Breast epithelium (tissue), 4 donors: ENCODE measurements at regions of chr15 and their contacts with region 1.

Region 1: DNA sequence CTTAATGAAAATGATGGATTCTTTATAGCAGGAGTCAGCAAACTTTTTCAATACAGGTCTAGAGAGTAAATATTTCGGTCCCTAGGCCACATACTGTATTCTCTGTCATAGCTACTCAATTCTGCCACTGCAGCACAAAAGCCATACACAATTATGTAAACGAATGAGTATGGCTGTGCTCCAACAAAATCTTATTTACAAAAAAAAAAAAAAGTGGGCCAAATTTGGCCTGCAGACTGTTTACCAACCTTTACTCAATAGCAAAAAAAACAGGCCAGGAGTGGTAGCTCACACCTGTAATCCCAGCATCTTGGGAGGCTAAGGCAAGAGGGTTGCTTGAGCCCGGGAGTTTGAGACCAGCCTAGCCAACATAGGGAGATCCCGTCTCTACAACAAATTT is 41.1 kb downstream of the TTBK2 start:
- DNase-seq: no peak
- H3K4me3 ChIP-seq: no peak overlapping the region
- H3K27ac ChIP-seq: no peak overlapping the region
- H3K4me1 ChIP-seq: no peaks in the 10 kb centered on the region
- H3K27me3 ChIP-seq: no peaks in the 10 kb centered on the region
- CTCF ChIP-seq: no peak
- POLR2A ChIP-seq: no peak

Region 2: DNA sequence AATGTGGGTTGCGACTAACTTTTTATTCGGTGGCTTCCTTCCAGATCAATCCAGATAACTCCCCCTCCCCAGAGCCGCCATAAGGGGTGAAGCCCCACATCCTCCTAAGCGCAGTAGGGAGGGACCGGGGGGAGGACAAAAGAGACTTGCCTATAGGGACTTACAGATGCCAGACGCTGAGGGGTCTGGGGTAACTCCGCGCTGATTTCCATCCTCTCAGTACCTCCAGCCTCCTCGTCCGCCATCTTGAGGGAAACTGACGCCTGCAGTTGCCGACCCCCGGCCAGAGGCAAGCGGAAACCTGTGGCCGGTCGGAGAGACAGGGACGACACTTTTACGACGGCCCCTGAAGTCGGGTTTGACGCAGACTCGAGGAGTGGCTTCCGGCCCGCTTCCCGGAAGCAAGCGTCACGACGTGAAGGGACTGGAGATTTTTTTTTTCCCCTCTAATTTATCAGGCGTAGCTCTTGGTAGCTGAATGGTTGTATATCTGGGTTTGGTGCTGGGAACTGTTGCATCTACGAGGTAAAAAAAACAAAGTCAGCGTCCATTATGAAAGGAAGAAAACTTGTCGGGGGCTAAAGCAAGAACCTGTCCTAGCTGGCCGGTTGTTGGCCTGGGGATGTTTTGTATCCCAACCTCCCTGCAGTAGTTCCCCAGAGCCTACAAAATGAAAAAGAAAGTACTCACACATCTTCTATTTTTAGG is 226.5 kb after region 1 on chr15 and contains the start of gene UBR1:
- intact Hi-C with region 1: loop called (anchors 5 kb)
- DNase-seq: peak; percentile 80
- H3K4me3 ChIP-seq: peak within 1 kb of the TSS; percentile 62 to 84 (median 79)
- H3K27ac ChIP-seq: peak within 1 kb of the TSS; percentile 90 to 93
- H3K4me1 ChIP-seq: peaks cover 0 to 5% of the 10 kb centered on the region in 2 donors
- H3K27me3 ChIP-seq: no peaks in the 10 kb centered on the region
- CTCF ChIP-seq: no peak
- POLR2A ChIP-seq: peak; percentile 63
- total RNA-seq, gene UBR1: 33.0 to 52.5 (median 48.5) TPM